AG04449 (cell line): ENCODE measurements at regions of chr17 and their contacts with region 1.

Region 1: GRCh38 chr17:6843241-6843880 is 11.8 kb upstream of the TEKT1 start:
- DNase-seq: no peak
- H3K4me3 ChIP-seq: no peak overlapping the region
- CTCF ChIP-seq: peak; percentile 26

Region 2: GRCh38 chr17:6666077-6666521 is 177.3 kb before region 1 on chr17:
- CTCF ChIA-PET with region 1: interaction called, 55 read pairs
- POLR2A ChIA-PET with region 1: no interaction called
- DNase-seq: no peak
- H3K4me3 ChIP-seq: no peak overlapping the region
- CTCF ChIP-seq: peak; percentile 92

Region 3: DNA sequence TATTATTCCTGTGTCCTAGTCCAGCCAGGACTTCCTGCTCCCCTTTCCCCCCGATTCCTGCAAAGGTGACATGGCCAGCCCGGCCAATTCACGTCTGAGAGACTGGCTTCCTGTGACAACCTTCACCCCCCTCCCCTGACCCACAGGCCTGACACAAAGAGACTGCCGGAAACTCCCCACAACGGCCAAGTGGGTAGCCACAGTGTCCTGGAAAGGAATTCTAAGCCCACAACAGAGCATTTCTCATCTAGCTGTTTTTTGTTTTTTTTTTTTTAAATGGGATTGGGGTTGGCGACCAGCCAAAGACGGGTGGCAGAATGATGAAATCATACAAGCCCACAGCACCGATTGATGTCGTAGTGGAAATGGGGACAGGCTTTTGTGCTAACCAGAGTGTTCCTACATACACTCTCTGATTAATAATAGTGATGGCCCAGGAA is 90.3 kb before region 1 on chr17:
- CTCF ChIA-PET with region 1: interaction called, 31 read pairs
- POLR2A ChIA-PET with region 1: no interaction called
- DNase-seq: peak; percentile 71
- H3K4me3 ChIP-seq: peak overlapping the region; percentile 9; the same call in 1 of the 2 replicates
- CTCF ChIP-seq: no peak

Region 4: DNA sequence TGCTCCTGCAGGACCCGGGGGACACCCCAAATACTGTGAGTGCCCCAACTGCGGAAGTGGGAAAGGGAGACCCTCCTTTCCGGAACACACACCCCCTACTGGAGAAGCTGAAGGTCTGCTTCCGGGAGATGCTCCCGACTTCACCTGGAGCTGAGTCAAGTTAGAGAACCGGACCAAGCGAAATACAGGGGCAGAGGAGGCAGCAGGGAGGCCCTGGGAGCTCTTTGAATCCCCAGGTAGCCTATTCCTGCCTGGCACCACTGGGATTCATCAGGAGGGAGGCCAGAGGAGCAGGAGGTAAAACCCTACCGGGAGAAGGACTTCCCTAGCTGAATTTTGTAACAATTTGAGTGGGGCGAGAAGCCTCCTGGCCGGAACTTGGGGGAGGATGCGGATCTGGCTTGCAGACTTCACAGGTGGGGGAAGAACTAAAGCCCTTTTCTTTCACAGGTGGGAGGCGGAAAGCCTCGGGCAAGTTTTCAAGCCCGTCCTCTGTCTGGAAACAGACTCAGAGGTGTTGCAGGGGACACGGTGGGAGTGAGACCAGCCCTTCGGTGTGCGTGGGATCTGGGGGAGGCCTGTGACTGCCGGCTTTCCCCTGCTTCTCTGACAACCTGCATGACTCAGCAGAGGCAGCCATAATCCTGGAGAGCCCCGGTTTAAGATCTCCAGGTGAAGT is 10.5 kb after region 1 on chr17:
- CTCF ChIA-PET with region 1: interaction called, 24 read pairs
- POLR2A ChIA-PET with region 1: no interaction called
- DNase-seq: no peak
- H3K4me3 ChIP-seq: no peak overlapping the region
- CTCF ChIP-seq: no peak

Region 5: GRCh38 chr17:7004398-7005253 is 161.3 kb after region 1 on chr17:
- CTCF ChIA-PET with region 1: interaction called, 30 read pairs
- POLR2A ChIA-PET with region 1: no interaction called
- DNase-seq: no peak
- H3K4me3 ChIP-seq: no peak overlapping the region
- CTCF ChIP-seq: peak; percentile 48